ENCODE measurements at regions of chr6 and their contacts with region 1.

Region 1: DNA sequence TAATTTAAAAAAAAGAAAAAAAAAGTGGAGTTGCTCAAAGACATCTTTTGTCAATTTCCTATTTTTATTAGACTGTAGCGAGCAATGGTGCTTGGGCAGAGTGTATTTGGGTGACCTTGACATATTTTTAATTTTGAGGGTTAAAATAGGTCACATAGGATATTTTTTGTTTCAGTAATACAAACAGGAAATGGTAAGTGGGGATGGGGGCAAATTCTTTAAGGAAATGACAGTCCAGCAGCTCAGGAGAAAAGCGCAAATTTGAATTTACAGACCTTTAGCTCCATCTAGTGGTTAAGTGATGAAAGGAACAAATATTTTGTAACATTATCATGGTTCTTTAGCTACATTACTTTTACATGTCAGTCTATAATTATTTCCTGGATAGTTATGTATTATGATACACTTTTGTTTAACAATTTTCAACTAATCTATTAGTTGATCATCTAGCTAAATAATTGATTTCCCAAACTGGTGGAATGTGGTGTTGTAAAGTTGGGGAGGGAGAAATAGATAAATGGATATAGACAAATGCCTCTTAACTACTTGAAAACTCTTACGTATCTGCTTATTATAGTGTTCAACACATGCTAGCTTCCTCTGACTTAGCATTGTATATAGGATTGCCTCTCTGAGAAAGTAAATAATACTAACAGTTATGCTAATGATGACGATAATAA is 10.0 kb downstream of the CITED2 start:
- DNase-seq: peak; percentile 62 to 71 (median 66)
- H3K4me3 ChIP-seq: no peak overlapping the region
- H3K27ac ChIP-seq: no peak overlapping the region
- H3K4me1 ChIP-seq: peaks cover 11 to 43% (median 23%) of the 10 kb centered on the region in 4 experiments
- H3K27me3 ChIP-seq: no peaks in the 10 kb centered on the region

Region 2: DNA sequence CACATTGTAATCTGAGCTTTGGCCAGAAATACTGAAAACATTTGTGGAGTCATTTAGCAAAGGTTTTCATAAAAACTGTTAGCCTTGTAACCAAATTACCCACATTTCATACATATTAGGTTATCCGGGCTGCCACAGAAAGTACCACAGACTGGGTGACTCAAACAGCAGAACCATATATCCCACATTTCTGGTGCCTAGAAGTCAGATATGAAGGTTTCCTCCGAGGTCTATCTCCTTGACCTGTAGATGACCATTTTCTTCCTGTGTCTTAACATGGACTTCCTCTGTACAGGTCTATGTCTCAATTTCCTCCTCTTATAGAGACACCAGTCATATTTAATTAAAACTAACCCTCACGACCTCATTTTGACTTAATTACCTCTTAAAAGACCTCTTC is 1036.2 kb before region 1 on chr6:
- CTCF ChIA-PET with region 1: no interaction called
- POLR2A ChIA-PET with region 1: no interaction called
- DNase-seq: no peak
- H3K4me3 ChIP-seq: no peak overlapping the region
- H3K27ac ChIP-seq: no peak overlapping the region
- H3K4me1 ChIP-seq: no peaks in the 10 kb centered on the region
- H3K27me3 ChIP-seq: no peaks in the 10 kb centered on the region

Region 3: GRCh38 chr6:139124887-139125672 is 239.4 kb before region 1 on chr6:
- CTCF ChIA-PET with region 1: interaction called, 12 read pairs
- POLR2A ChIA-PET with region 1: no interaction called
- DNase-seq: peak; percentile 83 to 91 (median 85)
- H3K4me3 ChIP-seq: peak overlapping the region in 2 of 7 experiments; percentile 28 to 48
- H3K27ac ChIP-seq: peak overlapping the region in 1 of 2 experiments; percentile 17
- H3K4me1 ChIP-seq: peaks cover 11 to 29% (median 16%) of the 10 kb centered on the region in 4 experiments
- H3K27me3 ChIP-seq: no peaks in the 10 kb centered on the region

Region 4: GRCh38 chr6:139219271-139219729 is 145.1 kb before region 1 on chr6:
- CTCF ChIA-PET with region 1: interaction called, 57 read pairs
- POLR2A ChIA-PET with region 1: interaction called, 4 read pairs
- DNase-seq: peak; percentile 82 to 89 (median 89)
- H3K4me3 ChIP-seq: no peak overlapping the region
- H3K27ac ChIP-seq: no peak overlapping the region
- H3K4me1 ChIP-seq: peaks cover 0 to 10% (median 6%) of the 10 kb centered on the region in 4 experiments
- H3K27me3 ChIP-seq: no peaks in the 10 kb centered on the region

Region 5: DNA sequence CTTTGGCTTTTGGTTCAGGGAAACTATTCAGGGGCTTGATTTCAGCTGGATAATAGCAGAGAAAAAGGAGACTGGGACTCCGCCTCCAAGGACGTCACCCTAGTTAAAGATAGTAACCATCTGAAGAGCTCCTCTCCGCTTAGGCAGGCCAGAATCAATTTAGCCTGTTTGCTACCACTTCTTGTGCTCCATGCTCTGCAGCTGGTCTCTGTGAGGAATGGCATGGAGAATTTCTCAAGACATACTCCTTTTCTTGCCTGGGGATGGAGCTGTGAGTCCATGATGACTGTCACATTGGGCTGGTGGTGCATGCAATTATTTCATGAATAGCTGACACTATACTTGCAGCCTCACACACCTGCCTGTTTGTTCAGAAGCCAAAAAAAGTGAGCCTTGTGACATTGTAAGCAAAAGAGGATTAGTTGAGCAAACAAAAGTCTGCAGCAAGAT is 134.0 kb before region 1 on chr6:
- CTCF ChIA-PET with region 1: interaction called, 26 read pairs
- POLR2A ChIA-PET with region 1: no interaction called
- DNase-seq: peak; percentile 23 to 46 (median 42)
- H3K4me3 ChIP-seq: no peak overlapping the region
- H3K27ac ChIP-seq: no peak overlapping the region
- H3K4me1 ChIP-seq: peaks cover 0 to 9% (median 0%) of the 10 kb centered on the region in 4 experiments
- H3K27me3 ChIP-seq: no peaks in the 10 kb centered on the region

Region 6: GRCh38 chr6:139291813-139292619 is 72.4 kb before region 1 on chr6 and contains the start of gene TXLNB:
- CTCF ChIA-PET with region 1: interaction called, 10 read pairs
- POLR2A ChIA-PET with region 1: interaction called, 4 read pairs
- DNase-seq: peak; percentile 75 to 98 (median 95)
- H3K4me3 ChIP-seq: peak within 1 kb of the TSS in 6 of 7 experiments; percentile 27 to 60 (median 46)
- H3K27ac ChIP-seq: peak within 1 kb of the TSS; percentile 81 to 89
- H3K4me1 ChIP-seq: peaks cover 27 to 66% (median 48%) of the 10 kb centered on the region in 4 experiments
- H3K27me3 ChIP-seq: no peaks in the 10 kb centered on the region

Region 7: DNA sequence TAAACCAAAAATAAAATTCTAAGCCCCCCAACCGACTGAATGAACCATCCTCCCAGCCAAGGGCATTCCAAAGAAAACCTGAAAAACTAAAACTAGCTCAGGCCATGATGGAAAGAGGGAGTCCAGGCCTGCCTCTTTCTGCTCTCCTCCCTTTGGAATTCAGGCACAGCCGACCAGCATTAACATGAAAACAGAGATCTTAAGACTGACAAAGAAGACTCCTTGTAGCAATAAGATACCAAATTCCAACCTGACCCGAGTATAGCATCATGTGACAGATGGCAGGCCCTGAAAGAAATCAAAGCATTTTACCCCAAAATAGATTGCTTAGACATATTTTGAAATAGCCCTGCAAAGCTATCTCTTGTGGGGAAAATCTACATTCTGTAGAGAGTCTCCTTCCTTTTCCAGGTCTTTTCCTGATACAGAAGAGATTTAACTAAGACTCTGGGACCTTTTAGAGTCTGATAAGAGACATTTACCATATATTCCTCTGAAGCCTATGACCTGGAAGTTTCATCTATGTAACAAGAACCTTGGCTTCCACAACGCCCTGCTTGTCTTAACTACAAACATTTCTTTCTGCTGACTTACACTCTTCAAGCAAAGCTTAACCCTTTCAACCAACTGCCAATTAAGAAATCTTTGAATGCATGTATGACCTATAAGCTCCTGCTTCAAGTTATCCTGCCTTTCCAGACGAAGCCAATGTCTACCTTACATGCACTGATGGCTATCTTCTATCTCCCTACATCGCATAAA is 50.5 kb before region 1 on chr6:
- CTCF ChIA-PET with region 1: no interaction called
- POLR2A ChIA-PET with region 1: no interaction called
- DNase-seq: no peak
- H3K4me3 ChIP-seq: no peak overlapping the region
- H3K27ac ChIP-seq: no peak overlapping the region
- H3K4me1 ChIP-seq: peaks cover 0 to 14% (median 4%) of the 10 kb centered on the region in 4 experiments
- H3K27me3 ChIP-seq: no peaks in the 10 kb centered on the region

Region 8: GRCh38 chr6:139349464-139350020 is 14.9 kb before region 1 on chr6:
- CTCF ChIA-PET with region 1: interaction called, 15 read pairs
- POLR2A ChIA-PET with region 1: no interaction called
- DNase-seq: no peak
- H3K4me3 ChIP-seq: no peak overlapping the region
- H3K27ac ChIP-seq: no peak overlapping the region
- H3K4me1 ChIP-seq: peaks cover 0 to 6% (median 0%) of the 10 kb centered on the region in 4 experiments
- H3K27me3 ChIP-seq: no peaks in the 10 kb centered on the region

Region 9: DNA sequence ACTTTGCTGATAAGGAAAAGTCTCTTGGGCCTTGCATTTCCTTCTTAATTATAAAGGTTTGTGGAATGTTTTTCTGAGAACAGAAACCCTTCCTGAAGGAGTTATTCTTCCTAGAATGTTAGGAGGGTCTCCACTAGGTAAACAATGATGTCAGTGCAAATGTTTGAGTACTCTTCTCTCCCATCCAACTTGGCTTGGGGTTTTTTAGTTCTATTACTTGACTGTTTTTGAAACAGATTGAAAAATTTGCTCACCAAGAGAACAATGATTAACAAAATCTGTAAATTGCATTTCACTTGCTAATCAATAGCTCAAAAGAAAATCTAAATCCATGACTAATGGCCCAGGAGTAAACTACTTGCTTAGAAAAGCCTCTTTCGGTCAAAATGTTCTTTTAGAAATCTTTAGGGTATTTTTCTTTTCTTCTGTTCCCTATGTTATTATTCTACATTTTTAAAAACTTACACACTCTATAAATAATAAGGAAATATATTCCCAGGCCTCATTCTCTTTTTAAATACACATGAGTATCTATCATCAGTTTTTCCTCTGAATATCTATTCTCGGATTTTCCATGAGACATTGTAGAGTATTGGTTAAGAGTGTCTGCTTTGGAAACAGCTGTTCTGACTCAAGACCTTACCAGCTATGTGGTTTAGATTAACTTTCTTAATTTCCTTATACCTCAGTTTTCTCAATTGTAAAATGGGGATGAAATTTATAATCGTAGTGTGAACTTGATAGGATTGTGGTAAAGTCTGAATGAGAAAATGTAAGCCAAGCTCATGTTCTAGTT is 244.2 kb after region 1 on chr6:
- CTCF ChIA-PET with region 1: no interaction called
- POLR2A ChIA-PET with region 1: no interaction called
- DNase-seq: no peak
- H3K4me3 ChIP-seq: no peak overlapping the region
- H3K27ac ChIP-seq: no peak overlapping the region
- H3K4me1 ChIP-seq: peaks cover 0 to 10% (median 1%) of the 10 kb centered on the region in 4 experiments
- H3K27me3 ChIP-seq: no peaks in the 10 kb centered on the region

Region 10: GRCh38 chr6:140052756-140053729 is 688.6 kb after region 1 on chr6:
- CTCF ChIA-PET with region 1: no interaction called
- POLR2A ChIA-PET with region 1: no interaction called
- DNase-seq: peak in 2 of 3 donors; percentile 9 to 12
- H3K4me3 ChIP-seq: no peak overlapping the region
- H3K27ac ChIP-seq: no peak overlapping the region
- H3K4me1 ChIP-seq: no peaks in the 10 kb centered on the region
- H3K27me3 ChIP-seq: no peaks in the 10 kb centered on the region